Activated T-helper 2 cell treated with anti-CD3 and anti-CD28 coated beads, Interferon-gamma antibody, Interleukin-2, Interleukin-4, amounts not matched to agents 10 μg/mL and 5 μg/mL and 100 μg/mL, durations not matched to agents 14 hours and 24 hours and 36 hours (primary cell): ENCODE measurements at regions of chr5 and their contacts with region 1.

Region 1: DNA sequence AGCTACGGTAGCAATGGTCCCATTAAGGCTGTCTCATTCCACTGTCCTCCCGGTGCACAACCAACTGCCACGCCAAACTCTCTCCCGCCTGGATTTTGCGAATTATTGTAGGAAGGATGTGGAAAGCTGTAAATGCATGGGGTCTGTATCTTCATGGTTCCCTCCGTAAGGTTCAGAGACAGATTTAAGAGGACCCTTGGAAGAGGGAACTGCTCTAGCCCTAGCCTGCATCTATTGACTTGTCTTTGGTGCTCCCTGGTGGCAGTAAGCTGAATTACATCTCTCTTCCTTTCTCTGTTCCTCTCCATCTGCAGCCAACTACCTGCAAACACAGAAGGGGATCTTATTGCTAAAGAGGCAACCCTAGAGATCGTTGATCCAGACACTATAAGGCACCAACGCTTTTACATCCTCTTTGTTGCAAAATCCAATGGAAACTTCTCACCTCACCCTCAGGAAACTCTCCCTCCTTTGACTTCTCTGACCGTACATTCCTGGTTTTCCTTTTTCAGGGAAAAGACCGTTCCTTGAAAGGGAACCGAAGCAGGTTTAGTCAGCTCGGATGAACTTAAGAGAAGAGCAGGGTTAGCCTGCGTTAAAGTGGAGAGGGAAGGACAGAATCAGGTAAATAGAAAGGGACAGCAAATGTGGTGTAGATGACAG is 11.9 kb downstream of the CAPSL start:
- DNase-seq: peak; percentile 45
- H3K4me3 Mint-ChIP-seq: peak overlapping the region; percentile 18
- H3K27ac Mint-ChIP-seq: no peak overlapping the region
- H3K4me1 Mint-ChIP-seq: peaks cover 37% of the 10 kb centered on the region
- H3K27me3 Mint-ChIP-seq: peaks cover 2% of the 10 kb centered on the region

Region 2: DNA sequence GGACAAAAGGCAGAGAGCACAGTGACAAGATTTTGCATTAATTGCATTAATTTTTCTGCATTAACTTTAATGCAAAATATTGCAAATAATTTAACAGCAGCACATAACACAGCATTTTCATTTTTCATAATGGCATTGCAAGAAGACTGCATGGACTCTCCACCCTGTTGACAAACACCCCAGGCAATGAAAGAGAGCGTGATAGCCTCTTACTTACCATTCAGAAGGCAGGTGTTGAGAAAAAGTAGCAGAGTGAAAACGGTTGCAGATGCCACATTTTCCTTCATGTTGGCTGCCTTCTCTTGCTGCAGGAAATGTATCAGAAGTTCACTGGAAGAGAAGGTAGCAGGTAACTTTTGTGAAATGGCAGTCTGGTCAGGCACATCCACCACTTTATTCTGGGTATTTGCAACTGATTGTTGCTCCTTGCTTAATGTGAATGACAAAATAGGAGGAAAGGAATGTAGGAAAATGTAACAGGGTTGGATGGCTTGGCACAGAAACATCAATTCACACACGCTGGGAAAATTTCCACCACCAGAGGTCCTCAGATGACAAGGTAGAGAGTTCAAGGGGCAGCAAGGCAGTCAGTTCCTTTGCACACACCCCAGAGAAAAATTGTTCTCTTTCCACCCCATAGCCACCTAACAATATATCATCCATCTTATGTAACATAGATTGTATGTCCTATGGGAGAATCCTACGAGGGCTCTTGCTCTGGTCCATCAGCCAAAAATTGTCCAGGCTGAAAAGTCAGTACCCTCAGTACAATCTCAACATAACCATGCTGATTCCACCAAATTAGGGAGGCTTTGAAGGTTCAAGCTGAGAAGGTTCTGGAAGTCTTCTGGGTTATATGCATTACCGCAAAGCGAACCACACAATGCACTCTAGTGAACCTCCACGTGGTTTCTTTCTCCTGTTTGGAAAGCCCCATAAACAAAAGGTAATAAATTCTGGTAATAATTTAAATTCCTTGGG is 836.9 kb before region 1 on chr5:
- intact Hi-C with region 1: loop called (anchors 1 kb)
- DNase-seq: peak; percentile 22
- H3K4me3 Mint-ChIP-seq: no peak overlapping the region
- H3K27ac Mint-ChIP-seq: no peak overlapping the region
- H3K4me1 Mint-ChIP-seq: no peaks in the 10 kb centered on the region
- H3K27me3 Mint-ChIP-seq: peaks cover 4% of the 10 kb centered on the region

Region 3: GRCh38 chr5:35651002-35651756 is 275.3 kb before region 1 on chr5:
- intact Hi-C with region 1: loop called (anchors 1 kb)
- DNase-seq: peak; percentile 46
- H3K4me3 Mint-ChIP-seq: no peak overlapping the region
- H3K27ac Mint-ChIP-seq: no peak overlapping the region
- H3K4me1 Mint-ChIP-seq: peaks cover 11% of the 10 kb centered on the region
- H3K27me3 Mint-ChIP-seq: no peaks in the 10 kb centered on the region

Region 4: GRCh38 chr5:35753490-35753889 is 173.0 kb before region 1 on chr5:
- intact Hi-C with region 1: no loop called
- DNase-seq: no peak
- H3K4me3 Mint-ChIP-seq: no peak overlapping the region
- H3K27ac Mint-ChIP-seq: no peak overlapping the region
- H3K4me1 Mint-ChIP-seq: peaks cover 6% of the 10 kb centered on the region
- H3K27me3 Mint-ChIP-seq: no peaks in the 10 kb centered on the region

Region 5: GRCh38 chr5:35777358-35778087 is 149.0 kb before region 1 on chr5:
- intact Hi-C with region 1: loop called (anchors 1 kb)
- DNase-seq: peak; percentile 43
- H3K4me3 Mint-ChIP-seq: no peak overlapping the region
- H3K27ac Mint-ChIP-seq: peak overlapping the region; percentile 66
- H3K4me1 Mint-ChIP-seq: peaks cover 62% of the 10 kb centered on the region
- H3K27me3 Mint-ChIP-seq: no peaks in the 10 kb centered on the region

Region 6: DNA sequence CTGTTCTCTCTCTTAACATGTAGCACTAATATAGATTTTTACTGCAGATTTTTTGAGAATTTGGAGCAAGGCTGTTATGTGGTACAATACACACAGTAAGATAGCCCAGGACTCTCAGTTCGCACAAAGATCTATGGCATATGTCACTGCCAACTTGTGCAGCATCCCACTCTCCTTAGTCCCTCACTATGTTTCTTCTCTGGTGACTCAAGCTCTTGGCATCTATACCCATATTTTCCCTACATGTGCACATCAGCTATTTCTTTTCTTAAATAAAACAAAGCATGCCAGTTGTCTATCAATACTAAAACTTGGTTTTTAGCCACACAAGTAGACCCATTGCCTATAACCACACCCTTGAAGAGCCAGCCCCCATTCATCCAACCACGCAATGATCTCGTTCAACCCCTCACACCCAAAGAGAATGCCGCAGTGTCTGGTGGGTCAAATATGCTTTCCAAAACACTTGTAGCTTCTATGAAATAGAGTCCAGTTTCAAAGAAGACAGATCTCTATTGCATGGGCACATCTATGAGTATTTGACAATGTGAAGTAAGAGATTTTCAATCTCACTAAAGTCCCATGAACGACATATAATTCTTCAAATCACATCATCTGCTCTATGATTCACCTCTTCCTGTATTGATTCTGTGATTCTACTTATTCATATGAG is 88.0 kb before region 1 on chr5:
- intact Hi-C with region 1: loop called (anchors 1 kb)
- DNase-seq: no peak
- H3K4me3 Mint-ChIP-seq: no peak overlapping the region
- H3K27ac Mint-ChIP-seq: peak overlapping the region; percentile 85
- H3K4me1 Mint-ChIP-seq: peaks cover 51% of the 10 kb centered on the region
- H3K27me3 Mint-ChIP-seq: no peaks in the 10 kb centered on the region

Region 7: GRCh38 chr5:36285837-36286615 is 359.5 kb after region 1 on chr5:
- intact Hi-C with region 1: no loop called
- DNase-seq: no peak
- H3K4me3 Mint-ChIP-seq: no peak overlapping the region
- H3K27ac Mint-ChIP-seq: no peak overlapping the region
- H3K4me1 Mint-ChIP-seq: no peaks in the 10 kb centered on the region
- H3K27me3 Mint-ChIP-seq: peaks cover 10% of the 10 kb centered on the region